IMR-90 (cell line): ENCODE measurements at regions of chr17 and their contacts with region 1.

Region 1: GRCh38 chr17:51166197-51166986 is at the start of gene NME2:
- DNase-seq: peak; percentile 77
- ATAC-seq: peak; percentile 95
- H3K4me3 ChIP-seq: peak within 1 kb of the TSS; percentile 87
- H3K27ac ChIP-seq: peak within 1 kb of the TSS; percentile 91
- H3K4me1 ChIP-seq: peaks cover 8% of the 10 kb centered on the region; the same call in 1 of the 2 replicates
- H3K27me3 ChIP-seq: no peaks in the 10 kb centered on the region
- CTCF ChIP-seq: no peak; the same call in 1 of the 2 replicates
- POLR2A ChIP-seq: peak; percentile 72
- RAD21 ChIP-seq: no peak
- total RNA-seq, gene NME2: 824 and 863 TPM in 2 replicates

Region 2: GRCh38 chr17:51087072-51087757 is 79.2 kb before region 1 on chr17:
- CTCF ChIA-PET with region 1: no interaction called
- POLR2A ChIA-PET with region 1: no interaction called
- dilution Hi-C with region 1: no loop called
- in situ Hi-C with region 1: no loop called
- intact Hi-C with region 1: no loop called
- DNase-seq: peak; percentile 50
- ATAC-seq: peak; percentile 22; the same call in 1 of the 2 replicates
- H3K4me3 ChIP-seq: no peak overlapping the region
- H3K27ac ChIP-seq: no peak overlapping the region
- H3K4me1 ChIP-seq: peaks cover 11% of the 10 kb centered on the region
- H3K27me3 ChIP-seq: no peaks in the 10 kb centered on the region
- CTCF ChIP-seq: no peak
- POLR2A ChIP-seq: no peak
- RAD21 ChIP-seq: no peak

Region 3: GRCh38 chr17:51585514-51586104 is 419.2 kb after region 1 on chr17:
- CTCF ChIA-PET with region 1: no interaction called
- POLR2A ChIA-PET with region 1: no interaction called
- dilution Hi-C with region 1: no loop called
- in situ Hi-C with region 1: no loop called
- intact Hi-C with region 1: no loop called
- DNase-seq: no peak
- ATAC-seq: no peak
- H3K4me3 ChIP-seq: no peak overlapping the region
- H3K27ac ChIP-seq: no peak overlapping the region
- H3K4me1 ChIP-seq: no peaks in the 10 kb centered on the region
- H3K27me3 ChIP-seq: no peaks in the 10 kb centered on the region
- CTCF ChIP-seq: no peak
- POLR2A ChIP-seq: no peak
- RAD21 ChIP-seq: no peak

Region 4: DNA sequence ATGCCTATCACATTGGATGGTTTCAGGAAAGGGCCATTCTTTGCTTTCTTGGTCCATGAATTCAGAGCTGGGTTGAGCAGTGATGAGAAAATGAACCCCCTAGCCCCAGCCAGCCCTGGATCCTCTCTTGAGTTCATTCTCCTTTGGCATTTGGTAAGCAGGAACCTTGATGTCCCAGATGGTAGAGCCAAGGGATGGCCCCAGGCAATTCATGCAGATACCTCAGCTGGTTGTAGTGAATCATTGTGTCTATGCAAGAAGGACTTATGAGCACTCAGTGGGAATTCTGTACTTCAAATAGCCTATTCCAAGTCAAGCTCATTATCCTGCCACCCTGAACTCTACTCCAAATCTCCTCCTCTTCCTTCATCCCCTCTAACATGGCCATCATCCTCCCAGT is 506.7 kb after region 1 on chr17:
- CTCF ChIA-PET with region 1: no interaction called
- POLR2A ChIA-PET with region 1: interaction called, 12 read pairs
- dilution Hi-C with region 1: no loop called
- in situ Hi-C with region 1: no loop called
- intact Hi-C with region 1: no loop called
- DNase-seq: no peak
- ATAC-seq: no peak
- H3K4me3 ChIP-seq: no peak overlapping the region
- H3K27ac ChIP-seq: no peak overlapping the region
- H3K4me1 ChIP-seq: no peaks in the 10 kb centered on the region
- H3K27me3 ChIP-seq: no peaks in the 10 kb centered on the region
- CTCF ChIP-seq: no peak
- POLR2A ChIP-seq: no peak
- RAD21 ChIP-seq: no peak